ENCODE measurements at regions of chr19 and their contacts with region 1.

Region 1: GRCh38 chr19:42108527-42109389 is 23.5 kb downstream of the POU2F2 start:
- DNase-seq: peak; percentile 56
- H3K4me3 ChIP-seq: no peak overlapping the region
- CTCF ChIP-seq: peak; percentile 100

Region 2: GRCh38 chr19:42092350-42092749 is 16.4 kb before region 1 on chr19:
- CTCF ChIA-PET with region 1: interaction called, 42 read pairs
- POLR2A ChIA-PET with region 1: no interaction called
- DNase-seq: no peak
- H3K4me3 ChIP-seq: no peak overlapping the region
- CTCF ChIP-seq: peak; percentile 46

Region 3: GRCh38 chr19:42132851-42133528 is 24.2 kb after region 1 on chr19:
- CTCF ChIA-PET with region 1: interaction called, 92 read pairs
- POLR2A ChIA-PET with region 1: interaction called, 7 read pairs
- DNase-seq: no peak
- H3K4me3 ChIP-seq: peak overlapping the region; percentile 62
- CTCF ChIP-seq: peak; percentile 95

Region 4: DNA sequence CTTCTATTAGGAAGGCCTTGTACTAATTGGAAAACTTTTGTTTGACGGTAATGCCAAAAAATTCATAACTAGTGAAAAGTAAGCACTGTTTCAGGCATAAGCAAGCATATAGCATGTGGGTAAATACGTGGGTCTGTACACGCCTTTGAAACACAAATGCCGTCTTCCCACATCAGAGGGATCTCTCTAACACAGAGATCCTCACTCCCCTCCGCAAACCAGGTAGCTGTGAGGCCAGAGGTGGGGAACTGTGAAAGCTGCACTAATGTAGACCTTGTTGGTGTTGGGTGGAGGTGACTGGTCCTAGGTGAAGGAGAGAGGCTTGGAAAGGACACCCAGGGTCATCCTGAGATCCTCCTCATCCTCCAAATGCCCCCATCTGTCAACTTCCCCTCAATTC is 39.5 kb after region 1 on chr19:
- CTCF ChIA-PET with region 1: interaction called, 11 read pairs
- POLR2A ChIA-PET with region 1: no interaction called
- DNase-seq: no peak
- H3K4me3 ChIP-seq: no peak overlapping the region
- CTCF ChIP-seq: no peak

Region 5: DNA sequence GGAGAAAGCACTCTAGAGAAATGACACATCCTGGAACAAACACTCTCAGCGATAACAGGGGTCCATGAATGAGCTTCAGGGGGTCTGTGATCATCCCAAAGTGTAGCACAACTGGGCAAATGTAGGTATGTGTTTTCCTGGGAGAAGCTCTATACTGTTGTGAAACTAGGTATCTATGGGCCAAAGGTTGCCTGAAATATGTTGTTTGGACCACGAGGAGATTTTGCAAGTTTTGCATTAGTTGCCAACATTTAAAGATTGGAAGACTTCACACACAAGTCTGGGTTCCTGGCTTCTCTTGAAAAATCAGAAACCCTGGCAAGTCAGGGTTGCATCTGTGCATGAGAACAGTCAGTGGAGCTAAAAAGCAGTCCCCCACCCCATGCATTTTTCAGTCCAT is 50.2 kb after region 1 on chr19:
- CTCF ChIA-PET with region 1: no interaction called
- POLR2A ChIA-PET with region 1: no interaction called
- DNase-seq: no peak
- H3K4me3 ChIP-seq: no peak overlapping the region
- CTCF ChIP-seq: no peak

Region 6: GRCh38 chr19:42184401-42184861 is 75.7 kb after region 1 on chr19:
- CTCF ChIA-PET with region 1: interaction called, 173 read pairs
- POLR2A ChIA-PET with region 1: no interaction called
- DNase-seq: peak; percentile 62
- H3K4me3 ChIP-seq: no peak overlapping the region
- CTCF ChIP-seq: peak; percentile 91

Region 7: GRCh38 chr19:42229855-42230351 is 121.1 kb after region 1 on chr19:
- CTCF ChIA-PET with region 1: interaction called, 17 read pairs
- POLR2A ChIA-PET with region 1: interaction called, 5 read pairs
- DNase-seq: no peak
- H3K4me3 ChIP-seq: no peak overlapping the region
- CTCF ChIP-seq: no peak

Measured in AG04449 (cell line).